ENCODE measurements at regions of chr18 and their contacts with region 1.

Region 1: DNA sequence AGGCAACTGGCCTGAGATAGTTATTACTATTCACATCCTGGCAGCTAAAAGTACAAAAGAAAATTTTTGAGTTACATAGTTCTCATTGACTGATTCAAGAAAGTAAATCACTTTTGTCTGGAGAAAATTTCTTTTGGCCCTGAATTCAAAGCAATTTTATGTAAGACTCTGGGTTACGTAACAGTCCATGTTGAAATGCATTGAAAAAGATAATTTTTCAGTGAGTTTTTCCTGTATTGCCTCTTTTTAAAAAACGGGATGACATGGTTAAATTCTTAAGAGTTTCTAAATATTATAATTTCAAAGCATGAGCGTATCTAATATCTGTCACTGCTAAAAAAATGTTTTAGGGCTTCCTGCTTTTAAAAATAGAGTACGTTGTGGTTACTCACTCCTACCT is 72.7 kb downstream of the ANKRD12 start:
- DNase-seq: no peak
- ATAC-seq: no peak
- H3K4me3 ChIP-seq: no peak overlapping the region
- H3K27ac ChIP-seq: no peak overlapping the region
- H3K4me1 ChIP-seq: peaks cover 0 to 28% (median 0%) of the 10 kb centered on the region in 12 donors
- H3K27me3 ChIP-seq: no peaks in the 10 kb centered on the region
- CTCF ChIP-seq: no peak
- POLR2A ChIP-seq: no peak

Region 2: GRCh38 chr18:9095297-9096006 is 113.8 kb before region 1 on chr18:
- intact Hi-C with region 1: no loop called
- DNase-seq: no peak
- ATAC-seq: no peak
- H3K4me3 ChIP-seq: peak overlapping the region in 1 of 12 donors; percentile 4
- H3K27ac ChIP-seq: peak overlapping the region in 2 of 12 donors; percentile 62 to 78
- H3K4me1 ChIP-seq: peaks cover 0 to 40% (median 2%) of the 10 kb centered on the region in 12 donors
- H3K27me3 ChIP-seq: no peaks in the 10 kb centered on the region
- CTCF ChIP-seq: no peak
- POLR2A ChIP-seq: no peak

Region 3: DNA sequence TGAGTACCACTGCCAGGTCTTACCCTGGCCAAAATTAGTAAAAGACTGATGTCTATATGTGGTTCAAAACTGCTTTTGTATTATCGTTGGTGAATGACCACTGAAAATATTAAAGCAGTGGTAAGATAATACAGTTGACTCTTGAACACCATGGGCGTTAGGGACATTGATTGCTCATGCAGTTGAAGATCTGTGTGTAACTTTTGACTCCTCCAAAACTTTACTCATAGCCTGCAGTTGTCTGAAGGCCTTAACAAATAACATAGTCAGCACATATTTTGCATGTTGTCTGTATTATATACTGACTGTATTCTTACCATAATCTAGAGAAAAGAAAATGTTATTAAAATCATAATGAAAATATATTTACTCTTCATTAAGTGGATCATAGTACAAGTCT is 78.5 kb before region 1 on chr18:
- intact Hi-C with region 1: no loop called
- DNase-seq: no peak
- ATAC-seq: no peak
- H3K4me3 ChIP-seq: no peak overlapping the region
- H3K27ac ChIP-seq: peak overlapping the region in 1 of 12 donors; percentile 23
- H3K4me1 ChIP-seq: peaks cover 0 to 44% (median 23%) of the 10 kb centered on the region in 12 donors
- H3K27me3 ChIP-seq: no peaks in the 10 kb centered on the region
- CTCF ChIP-seq: no peak
- POLR2A ChIP-seq: no peak

Region 4: DNA sequence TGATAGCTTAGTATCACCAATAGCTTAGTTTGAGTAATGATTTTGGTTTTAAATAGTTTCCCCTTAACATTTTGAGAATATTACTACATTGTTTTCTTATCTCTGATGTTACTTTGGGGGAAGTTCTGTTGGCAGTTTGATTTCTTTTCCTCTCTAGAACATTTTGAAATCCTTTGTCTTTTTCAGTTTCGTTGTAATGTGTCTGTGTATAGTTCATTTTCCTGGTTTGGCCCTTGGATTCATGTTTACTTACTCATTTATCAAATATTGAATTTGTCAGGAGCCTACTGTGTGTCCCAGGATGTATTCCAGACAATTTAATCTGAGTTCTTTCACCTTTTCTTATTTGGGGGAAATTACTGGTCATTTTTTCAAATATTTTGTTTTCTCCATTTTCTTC is 56.0 kb before region 1 on chr18:
- intact Hi-C with region 1: loop called in 1 of 10 experiments (anchors 10 kb)
- DNase-seq: no peak
- ATAC-seq: no peak
- H3K4me3 ChIP-seq: no peak overlapping the region
- H3K27ac ChIP-seq: peak overlapping the region in 1 of 12 donors; percentile 14
- H3K4me1 ChIP-seq: peaks cover 0 to 86% (median 36%) of the 10 kb centered on the region in 12 donors
- H3K27me3 ChIP-seq: no peaks in the 10 kb centered on the region
- CTCF ChIP-seq: no peak
- POLR2A ChIP-seq: no peak

Region 5: DNA sequence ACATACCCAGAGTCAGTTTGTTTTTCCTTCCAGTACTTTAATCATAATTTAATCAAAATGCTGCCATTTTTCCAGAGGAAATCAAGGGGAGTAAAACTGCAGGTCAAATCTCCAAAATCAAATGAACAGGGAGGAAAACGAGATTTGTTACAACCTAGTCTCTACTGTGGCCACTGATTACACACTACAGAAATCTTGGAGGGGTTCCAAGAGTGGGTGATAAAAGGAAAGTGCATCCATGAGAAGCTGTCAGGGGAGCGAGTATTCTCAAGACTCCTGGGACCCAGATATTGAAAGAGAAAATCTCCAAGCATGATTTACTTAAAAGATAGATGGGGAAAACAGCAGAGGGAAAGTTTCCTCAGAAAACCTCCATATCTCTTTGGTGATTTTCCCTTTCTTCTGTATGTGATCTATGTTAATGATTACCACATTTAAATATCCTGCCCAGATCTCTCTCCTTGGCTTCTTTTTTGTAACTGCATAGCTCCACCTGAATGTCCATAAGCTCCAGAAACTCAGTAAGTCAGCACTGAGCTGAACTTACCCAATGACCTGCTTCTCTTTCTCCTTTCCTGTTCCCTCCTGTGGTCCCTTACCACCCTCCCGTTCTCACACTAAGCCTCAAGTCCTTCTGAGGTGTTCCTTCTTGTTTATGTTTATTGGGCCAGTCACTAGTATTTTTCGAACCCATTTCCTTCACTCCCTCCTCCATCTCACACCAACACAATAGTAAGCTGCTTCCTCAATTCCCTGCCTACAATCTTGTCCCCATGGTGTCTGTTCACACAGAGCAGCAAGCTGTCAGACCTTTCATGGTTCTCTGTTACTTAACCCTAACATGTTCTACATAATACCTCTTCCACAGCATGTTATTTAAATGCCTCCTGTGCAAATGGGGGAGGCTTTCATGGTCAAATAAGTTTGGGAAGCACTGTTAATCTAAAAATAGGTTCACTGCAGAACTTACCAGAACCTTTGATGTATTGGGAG is 51.4 kb after region 1 on chr18:
- intact Hi-C with region 1: loop called in 1 of 10 experiments (anchors 10 kb)
- DNase-seq: no peak
- ATAC-seq: peak in 2 of 4 donors; percentile 34 to 42
- H3K4me3 ChIP-seq: no peak overlapping the region
- H3K27ac ChIP-seq: no peak overlapping the region
- H3K4me1 ChIP-seq: peaks cover 0 to 7% (median 0%) of the 10 kb centered on the region in 12 donors
- H3K27me3 ChIP-seq: no peaks in the 10 kb centered on the region
- CTCF ChIP-seq: no peak
- POLR2A ChIP-seq: no peak